ENCODE measurements at regions of chr1 and their contacts with region 1.

Region 1: GRCh38 chr1:17059739-17060460 is 6.1 kb upstream of the SDHB start:
- DNase-seq: peak; percentile 81 to 87 (median 86)
- ATAC-seq: peak; percentile 91 to 96 (median 92)
- H3K4me3 ChIP-seq: no peak overlapping the region
- H3K27ac ChIP-seq: no peak overlapping the region
- H3K4me1 ChIP-seq: peaks cover 0 to 13% (median 5%) of the 10 kb centered on the region in 4 donors
- H3K27me3 ChIP-seq: no peaks in the 10 kb centered on the region
- CTCF ChIP-seq: peak; percentile 76 to 84 (median 80)
- POLR2A ChIP-seq: no peak

Region 2: DNA sequence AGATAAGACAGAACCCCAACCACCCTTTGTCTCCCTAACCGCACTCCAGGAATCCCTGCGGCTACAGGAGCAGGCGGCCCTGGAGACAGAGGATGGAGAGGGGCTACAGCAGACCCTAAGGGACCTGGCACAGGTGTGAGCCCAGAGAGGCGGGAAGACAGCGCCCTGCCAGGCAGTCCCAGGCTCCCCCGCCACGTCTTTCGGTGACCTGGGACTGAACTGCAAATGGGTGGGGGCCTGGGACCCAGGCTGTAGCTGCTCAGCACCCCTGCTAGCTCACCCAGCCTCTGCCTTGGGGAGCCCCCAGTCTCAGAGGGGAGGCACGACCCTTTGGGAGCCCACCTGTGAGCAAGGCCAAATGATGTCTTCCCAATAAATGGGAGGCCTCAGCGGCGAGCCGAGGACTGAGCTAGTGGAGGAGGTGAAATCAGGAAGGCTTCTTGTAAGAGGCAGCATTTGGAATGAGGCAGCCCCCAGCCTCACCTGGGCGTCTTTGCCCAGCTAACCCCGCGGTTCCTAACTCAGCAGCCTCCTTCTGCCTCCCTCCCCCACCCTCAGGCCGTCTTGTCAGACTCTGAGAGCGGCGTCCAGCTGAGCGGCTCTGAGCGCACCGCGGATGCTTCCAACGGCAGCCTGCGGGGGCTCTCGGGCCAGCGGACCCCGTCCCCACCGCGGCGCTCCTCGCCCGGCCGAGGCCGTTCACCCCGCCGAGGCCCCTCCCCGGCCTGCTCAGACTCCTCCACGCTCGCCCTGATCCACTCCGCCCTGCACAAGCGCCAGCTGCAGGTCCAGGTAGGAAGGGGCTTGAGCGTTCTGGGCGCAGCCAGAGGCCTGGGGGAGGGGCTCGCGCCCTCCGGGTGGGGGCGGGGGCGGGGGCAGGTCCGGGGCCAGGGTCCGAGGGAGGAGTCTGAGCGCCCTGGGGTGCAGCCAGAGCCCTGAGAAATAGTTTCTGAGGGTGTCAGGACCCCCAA is 121.3 kb before region 1 on chr1:
- intact Hi-C with region 1: no loop called
- DNase-seq: no peak
- ATAC-seq: peak in 2 of 4 donors; percentile 15 to 20
- H3K4me3 ChIP-seq: no peak overlapping the region
- H3K27ac ChIP-seq: no peak overlapping the region
- H3K4me1 ChIP-seq: no peaks in the 10 kb centered on the region
- H3K27me3 ChIP-seq: no peaks in the 10 kb centered on the region
- CTCF ChIP-seq: no peak
- POLR2A ChIP-seq: no peak

Region 3: DNA sequence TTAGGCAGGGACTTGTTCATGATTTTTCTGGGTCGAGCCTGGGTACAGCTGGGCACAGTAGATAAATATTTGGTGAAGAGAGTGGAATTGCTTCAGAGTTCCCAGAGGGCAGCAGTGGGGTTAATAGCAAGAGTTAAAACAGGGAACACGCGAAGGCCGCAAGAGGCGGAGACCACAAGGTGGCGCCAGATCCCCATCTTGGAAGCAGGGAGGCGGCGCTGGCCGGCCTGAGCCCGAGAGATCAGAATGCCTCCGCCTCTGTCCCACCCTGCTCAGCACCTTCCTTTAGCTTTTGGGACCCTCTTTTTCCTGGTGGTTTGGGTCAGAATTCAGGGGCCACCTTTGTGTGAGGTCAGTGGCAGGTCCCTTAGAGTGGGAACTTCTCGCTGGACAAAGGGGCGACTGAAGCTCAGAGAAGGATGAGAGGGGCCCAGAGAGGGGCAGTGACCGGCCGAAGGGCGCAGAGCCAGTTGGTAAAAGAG is 65.9 kb after region 1 on chr1:
- intact Hi-C with region 1: loop called in 1 of 2 experiments (anchors 5 kb)
- DNase-seq: peak; percentile 90 to 92 (median 90)
- ATAC-seq: peak; percentile 93 to 97 (median 94)
- H3K4me3 ChIP-seq: no peak overlapping the region
- H3K27ac ChIP-seq: no peak overlapping the region
- H3K4me1 ChIP-seq: peaks cover 0 to 3% (median 0%) of the 10 kb centered on the region in 4 donors
- H3K27me3 ChIP-seq: no peaks in the 10 kb centered on the region
- CTCF ChIP-seq: peak; percentile 97 to 99 (median 97)
- POLR2A ChIP-seq: no peak

Region 4: GRCh38 chr1:17236779-17237560 is 177.1 kb after region 1 on chr1:
- intact Hi-C with region 1: loop called (anchors 5 kb)
- DNase-seq: peak; percentile 90 to 95 (median 91)
- ATAC-seq: peak; percentile 84 to 93 (median 90)
- H3K4me3 ChIP-seq: no peak overlapping the region
- H3K27ac ChIP-seq: no peak overlapping the region
- H3K4me1 ChIP-seq: peaks cover 0 to 5% (median 0%) of the 10 kb centered on the region in 4 donors
- H3K27me3 ChIP-seq: no peaks in the 10 kb centered on the region
- CTCF ChIP-seq: peak; percentile 94 to 96 (median 94)
- POLR2A ChIP-seq: no peak

Region 5: GRCh38 chr1:17335821-17336710 is 276.2 kb after region 1 on chr1:
- intact Hi-C with region 1: loop called in 1 of 2 experiments (anchors 5 kb)
- DNase-seq: peak; percentile 69 to 73 (median 70)
- ATAC-seq: peak; percentile 69 to 80 (median 74)
- H3K4me3 ChIP-seq: no peak overlapping the region
- H3K27ac ChIP-seq: no peak overlapping the region
- H3K4me1 ChIP-seq: no peaks in the 10 kb centered on the region
- H3K27me3 ChIP-seq: no peaks in the 10 kb centered on the region
- CTCF ChIP-seq: peak; percentile 62 to 89 (median 81)
- POLR2A ChIP-seq: no peak